ENCODE measurements at regions of chr21 and their contacts with region 1.

Region 1: GRCh38 chr21:46028573-46029091 is 47.1 kb downstream of the COL6A1 start:
- DNase-seq: peak; percentile 84
- ATAC-seq: peak; percentile 66
- H3K4me3 ChIP-seq: no peak overlapping the region
- H3K27ac ChIP-seq: peak overlapping the region; percentile 96
- H3K4me1 ChIP-seq: peaks cover 17% of the 10 kb centered on the region
- H3K27me3 ChIP-seq: no peaks in the 10 kb centered on the region
- CTCF ChIP-seq: no peak
- POLR2A ChIP-seq: no peak
- RAD21 ChIP-seq: no peak

Region 2: GRCh38 chr21:45846373-45847160 is 182.1 kb before region 1 on chr21:
- CTCF ChIA-PET with region 1: no interaction called
- POLR2A ChIA-PET with region 1: no interaction called
- dilution Hi-C with region 1: no loop called
- in situ Hi-C with region 1: no loop called
- intact Hi-C with region 1: no loop called
- DNase-seq: peak; percentile 14
- ATAC-seq: no peak
- H3K4me3 ChIP-seq: no peak overlapping the region
- H3K27ac ChIP-seq: no peak overlapping the region
- H3K4me1 ChIP-seq: peaks cover 3% of the 10 kb centered on the region
- H3K27me3 ChIP-seq: no peaks in the 10 kb centered on the region
- CTCF ChIP-seq: no peak
- POLR2A ChIP-seq: no peak
- RAD21 ChIP-seq: no peak

Region 3: DNA sequence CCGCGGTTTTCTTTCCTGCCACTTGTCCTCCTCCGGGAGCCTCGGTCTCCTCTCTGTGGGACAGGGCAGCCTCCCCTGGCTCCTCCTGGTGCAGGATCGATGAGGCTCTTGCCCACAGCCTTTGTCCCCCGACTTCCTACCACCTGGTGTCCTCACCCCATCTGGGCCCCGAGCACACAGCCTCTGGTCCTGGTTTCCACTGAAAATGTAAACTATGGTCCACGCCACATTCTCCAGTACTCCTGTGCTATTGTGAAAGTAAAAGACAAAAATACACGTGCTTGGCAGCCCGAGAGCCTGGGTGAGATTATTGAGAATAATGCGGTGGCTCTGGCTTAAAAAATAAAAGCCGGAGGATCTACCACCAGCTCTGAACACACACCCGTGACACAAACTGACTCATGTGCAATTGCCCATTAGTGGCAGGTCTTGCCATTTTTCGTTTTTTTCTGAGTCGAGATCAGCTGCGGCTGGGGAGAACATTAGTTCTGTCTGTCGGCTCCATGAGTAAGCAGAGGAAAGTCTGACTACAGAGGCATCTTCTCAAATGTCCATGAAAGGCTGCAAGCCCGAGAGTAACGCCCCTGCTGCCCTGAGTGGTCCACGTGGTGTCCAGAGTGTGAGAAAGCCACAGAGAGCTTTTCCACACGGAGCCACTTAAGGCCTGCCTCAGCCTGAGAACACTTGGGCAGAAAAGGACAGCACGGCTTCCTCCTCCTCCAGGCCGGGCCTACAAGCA is 63.6 kb after region 1 on chr21:
- CTCF ChIA-PET with region 1: no interaction called
- POLR2A ChIA-PET with region 1: no interaction called
- dilution Hi-C with region 1: no loop called
- in situ Hi-C with region 1: no loop called
- intact Hi-C with region 1: loop called (anchors 1 kb)
- DNase-seq: peak; percentile 99
- ATAC-seq: peak; percentile 86
- H3K4me3 ChIP-seq: peak overlapping the region; percentile 28
- H3K27ac ChIP-seq: peak overlapping the region; percentile 92
- H3K4me1 ChIP-seq: peaks cover 24% of the 10 kb centered on the region
- H3K27me3 ChIP-seq: no peaks in the 10 kb centered on the region
- CTCF ChIP-seq: 0 out of 2 replicates have a peak, but pooled peaks have one; percentile 0
- POLR2A ChIP-seq: peak; percentile 76
- RAD21 ChIP-seq: peak; percentile 22; the same call in 1 of the 2 replicates

Measured in IMR-90 (cell line).